GM13976 (cell line): ENCODE measurements at regions of chr19 and their contacts with region 1.

Region 1: DNA sequence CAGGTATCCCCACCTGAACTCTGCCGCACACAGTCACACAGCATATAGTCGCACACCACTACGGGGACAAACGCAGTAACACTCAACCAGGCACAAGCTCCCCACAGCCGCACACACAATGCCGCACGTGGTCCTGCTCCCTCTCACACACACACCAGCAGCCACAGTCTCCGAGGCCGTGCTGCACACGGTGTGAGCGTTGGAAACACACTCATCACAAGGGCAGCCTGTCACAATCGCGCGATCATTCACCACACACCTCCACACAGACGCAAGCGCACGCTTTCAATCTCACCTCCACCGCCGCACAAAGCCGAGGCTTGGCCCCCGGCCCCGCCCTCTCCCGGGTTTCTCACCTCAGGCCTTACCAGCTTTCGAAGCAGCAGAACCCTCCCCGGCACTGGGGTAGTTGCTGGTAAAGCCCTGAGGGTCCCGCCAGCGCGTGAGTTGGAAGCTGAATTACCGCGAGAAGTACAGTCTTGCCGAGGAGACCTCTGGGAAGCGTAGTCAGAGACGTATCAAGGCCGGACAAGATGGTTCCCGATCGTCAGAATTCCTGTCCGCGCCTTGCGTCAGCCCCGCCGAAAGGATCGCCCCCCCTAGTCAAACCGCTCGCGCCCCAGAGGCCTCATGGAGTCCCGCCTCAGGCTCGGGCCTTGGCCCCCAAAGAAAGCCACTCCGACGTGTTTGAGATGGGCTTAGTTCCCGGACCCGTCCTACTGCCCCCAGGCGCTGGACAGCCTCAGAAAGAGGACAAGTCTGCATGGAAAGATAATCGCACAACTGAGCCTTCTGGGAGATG is at the start of gene ZNF566:
- DNase-seq: peak; percentile 96
- CTCF ChIP-seq: no peak

Region 2: DNA sequence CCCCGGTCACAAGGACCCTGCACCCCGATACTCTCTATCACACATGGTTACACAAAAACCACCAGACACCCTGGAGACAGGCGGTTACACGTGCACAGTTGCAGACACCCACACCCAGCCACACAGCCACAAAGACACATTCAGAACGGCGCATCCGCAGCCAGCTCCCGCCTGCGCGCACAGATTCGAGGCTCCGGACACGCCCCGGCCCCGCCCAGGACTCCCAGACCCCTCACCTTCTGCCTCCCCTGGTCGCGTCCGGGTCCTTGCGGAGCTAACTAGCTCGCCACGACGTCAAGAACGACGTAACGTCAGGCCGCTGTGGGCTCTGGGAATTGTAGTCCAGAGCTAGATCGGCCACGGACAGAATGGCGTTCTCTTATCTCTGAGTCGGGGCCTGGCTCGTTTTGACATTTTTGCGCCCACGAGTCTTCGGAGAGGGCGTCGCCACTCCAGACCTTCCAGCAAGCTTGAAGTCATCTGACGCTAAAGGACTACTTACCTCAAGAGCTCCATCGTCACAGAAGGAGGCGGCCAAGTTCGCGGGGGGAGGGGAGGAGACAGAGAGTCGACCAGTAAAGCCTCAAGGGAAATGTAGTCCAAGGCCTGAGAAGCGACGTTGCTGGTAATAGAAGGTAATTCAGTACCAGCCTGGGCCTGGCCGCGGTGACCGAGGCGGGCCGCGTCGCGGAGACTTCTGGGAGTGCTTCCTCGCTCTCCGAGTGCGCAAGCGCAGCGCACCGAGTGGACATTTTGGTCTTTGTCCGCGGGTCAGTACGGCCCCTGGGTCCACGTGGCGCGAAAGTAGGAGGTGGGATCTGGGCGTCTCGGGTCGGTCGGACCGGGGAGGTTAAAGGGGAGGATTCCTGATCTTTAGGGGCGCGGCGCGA is 274.7 kb before region 1 on chr19 and contains the starts of genes ZNF146 and ZNF565:
- in situ Hi-C with region 1: loop called (anchors 25 kb)
- DNase-seq: peak; percentile 95
- CTCF ChIP-seq: no peak